K562 (cell line): ENCODE measurements at regions of chr7 and their contacts with region 1.

Region 1: GRCh38 chr7:103989785-103990767 is 618 bp upstream of the RELN start:
- DNase-seq: peak; percentile 71 to 82 (median 74)
- ATAC-seq: peak; percentile 71
- H3K4me3 ChIP-seq: peak overlapping the region; percentile 62
- H3K27ac ChIP-seq: peak overlapping the region; percentile 74
- H3K4me1 ChIP-seq: peaks cover 27 to 36% of the 10 kb centered on the region in 2 experiments
- H3K27me3 ChIP-seq: no peaks in the 10 kb centered on the region
- CTCF ChIP-seq: peak in 2 of 3 experiments; percentile 31 to 69; a peak in 4 of 6 replicates
- EP300 ChIP-seq: no peak
- POLR2A ChIP-seq: peak; percentile 59; the same call in 1 of the 2 replicates
- RAD21 ChIP-seq: peak in 1 of 2 experiments; percentile 24; a peak in 2 of 4 replicates

Region 2: GRCh38 chr7:103613655-103614642 is 376.1 kb before region 1 on chr7:
- CTCF ChIA-PET with region 1: no interaction called
- POLR2A ChIA-PET with region 1: no interaction called
- in situ Hi-C with region 1: no loop called
- intact Hi-C with region 1: no loop called
- DNase-seq: peak; percentile 16 to 71 (median 40)
- ATAC-seq: peak; percentile 93
- H3K4me3 ChIP-seq: no peak overlapping the region
- H3K27ac ChIP-seq: peak overlapping the region; percentile 66
- H3K4me1 ChIP-seq: peaks cover 0 to 21% of the 10 kb centered on the region in 2 experiments; a peak in 3 of 5 replicates
- H3K27me3 ChIP-seq: no peaks in the 10 kb centered on the region
- CTCF ChIP-seq: peak; percentile 41 to 68 (median 65); a peak in 5 of 6 replicates
- EP300 ChIP-seq: no peak
- POLR2A ChIP-seq: no peak
- RAD21 ChIP-seq: peak; percentile 46 to 73

Region 3: GRCh38 chr7:103887855-103888602 is 102.0 kb before region 1 on chr7:
- CTCF ChIA-PET with region 1: no interaction called
- POLR2A ChIA-PET with region 1: no interaction called
- in situ Hi-C with region 1: no loop called
- intact Hi-C with region 1: loop called (anchors 2 kb)
- DNase-seq: peak; percentile 27 to 68 (median 55)
- ATAC-seq: peak; percentile 95
- H3K4me3 ChIP-seq: no peak overlapping the region
- H3K27ac ChIP-seq: peak overlapping the region; percentile 11; the same call in 1 of the 3 replicates
- H3K4me1 ChIP-seq: peaks cover 4 to 23% of the 10 kb centered on the region in 2 experiments; a peak in 3 of 5 replicates
- H3K27me3 ChIP-seq: no peaks in the 10 kb centered on the region
- CTCF ChIP-seq: peak; percentile 55 to 65 (median 57)
- EP300 ChIP-seq: no peak
- POLR2A ChIP-seq: no peak
- RAD21 ChIP-seq: peak in 1 of 2 experiments; percentile 50; a peak in 2 of 4 replicates

Region 4: DNA sequence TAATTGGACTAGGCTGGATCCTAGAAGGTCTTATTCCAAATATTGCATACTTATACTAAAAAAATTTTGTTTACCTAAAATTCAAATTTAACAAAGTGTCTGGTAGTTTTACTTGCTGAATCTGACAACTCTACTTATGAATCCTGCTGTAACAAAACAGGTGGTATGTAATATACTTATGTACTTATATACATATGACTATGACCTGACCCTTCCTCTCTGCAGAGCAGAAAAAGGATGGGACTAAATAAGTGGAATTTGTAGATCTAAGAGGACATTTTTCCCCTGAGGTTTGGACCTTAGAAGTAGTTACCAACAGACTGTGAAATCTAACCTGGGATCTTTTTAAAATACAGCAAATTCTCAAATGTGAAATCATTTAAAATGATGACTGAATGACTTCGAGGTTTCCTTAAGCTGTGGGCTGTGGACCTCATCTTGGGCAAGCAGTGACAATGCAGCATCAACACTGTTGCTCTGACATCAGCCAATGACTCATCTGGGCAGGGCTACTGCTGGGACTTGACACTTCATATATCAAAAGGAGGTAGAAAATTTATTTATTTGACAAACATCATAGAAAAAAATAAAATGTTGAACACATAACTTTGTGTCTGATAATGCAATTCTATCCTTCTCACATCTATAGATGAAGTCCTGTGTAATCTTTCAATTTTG is 74.3 kb before region 1 on chr7:
- CTCF ChIA-PET with region 1: no interaction called
- POLR2A ChIA-PET with region 1: no interaction called
- in situ Hi-C with region 1: no loop called
- intact Hi-C with region 1: loop called (anchors 5 kb)
- DNase-seq: peak; percentile 59 to 90 (median 70)
- ATAC-seq: peak; percentile 86
- H3K4me3 ChIP-seq: no peak overlapping the region
- H3K27ac ChIP-seq: peak overlapping the region; percentile 61; the same call in 2 of the 3 replicates
- H3K4me1 ChIP-seq: peaks cover 15 to 44% of the 10 kb centered on the region in 2 experiments
- H3K27me3 ChIP-seq: no peaks in the 10 kb centered on the region
- CTCF ChIP-seq: no peak
- EP300 ChIP-seq: peak; percentile 79
- POLR2A ChIP-seq: no peak
- RAD21 ChIP-seq: no peak

Region 5: GRCh38 chr7:104825099-104825498 is 835.0 kb after region 1 on chr7:
- CTCF ChIA-PET with region 1: no interaction called
- POLR2A ChIA-PET with region 1: no interaction called
- in situ Hi-C with region 1: no loop called
- intact Hi-C with region 1: no loop called
- DNase-seq: no peak
- ATAC-seq: no peak
- H3K4me3 ChIP-seq: no peak overlapping the region
- H3K27ac ChIP-seq: no peak overlapping the region
- H3K4me1 ChIP-seq: no peaks in the 10 kb centered on the region
- H3K27me3 ChIP-seq: peaks cover 3 to 4% of the 10 kb centered on the region in 2 experiments; a peak in 2 of 5 replicates
- CTCF ChIP-seq: no peak
- EP300 ChIP-seq: no peak
- POLR2A ChIP-seq: no peak
- RAD21 ChIP-seq: no peak